Mammary epithelial cell (primary cell): ENCODE measurements at regions of chr2 and their contacts with region 1.

Region 1: GRCh38 chr2:218870984-218871344 is 9.7 kb upstream of the WNT10A start:
- DNase-seq: no peak
- H3K4me3 ChIP-seq: no peak overlapping the region
- H3K27ac ChIP-seq: no peak overlapping the region
- H3K4me1 ChIP-seq: no peaks in the 10 kb centered on the region
- H3K27me3 ChIP-seq: no peaks in the 10 kb centered on the region
- CTCF ChIP-seq: no peak

Region 2: DNA sequence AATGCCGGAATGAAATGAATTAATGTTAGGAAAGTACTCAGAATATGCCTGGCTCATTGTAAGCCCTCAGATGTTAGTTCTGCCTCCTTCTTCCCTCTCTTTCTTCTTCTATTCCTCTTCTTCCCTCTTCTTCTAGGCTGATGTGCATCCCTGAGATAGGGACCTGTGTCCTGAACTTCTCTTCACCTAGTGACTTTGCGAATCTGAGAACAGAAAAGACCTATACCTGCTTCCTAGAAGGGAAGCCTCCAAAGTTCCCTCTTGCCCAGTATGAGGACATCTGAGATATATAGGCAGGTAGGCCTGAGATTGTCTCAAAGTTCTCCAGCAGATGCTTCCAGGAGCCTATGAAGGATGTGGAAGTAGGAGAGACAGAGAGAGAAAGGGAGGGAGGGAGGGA is 97.1 kb before region 1 on chr2:
- CTCF ChIA-PET with region 1: no interaction called
- dilution Hi-C with region 1: loop called (anchors 5 kb)
- in situ Hi-C with region 1: no loop called
- intact Hi-C with region 1: no loop called
- DNase-seq: no peak
- H3K4me3 ChIP-seq: no peak overlapping the region
- H3K27ac ChIP-seq: no peak overlapping the region
- H3K4me1 ChIP-seq: no peaks in the 10 kb centered on the region
- H3K27me3 ChIP-seq: no peaks in the 10 kb centered on the region
- CTCF ChIP-seq: no peak

Region 3: DNA sequence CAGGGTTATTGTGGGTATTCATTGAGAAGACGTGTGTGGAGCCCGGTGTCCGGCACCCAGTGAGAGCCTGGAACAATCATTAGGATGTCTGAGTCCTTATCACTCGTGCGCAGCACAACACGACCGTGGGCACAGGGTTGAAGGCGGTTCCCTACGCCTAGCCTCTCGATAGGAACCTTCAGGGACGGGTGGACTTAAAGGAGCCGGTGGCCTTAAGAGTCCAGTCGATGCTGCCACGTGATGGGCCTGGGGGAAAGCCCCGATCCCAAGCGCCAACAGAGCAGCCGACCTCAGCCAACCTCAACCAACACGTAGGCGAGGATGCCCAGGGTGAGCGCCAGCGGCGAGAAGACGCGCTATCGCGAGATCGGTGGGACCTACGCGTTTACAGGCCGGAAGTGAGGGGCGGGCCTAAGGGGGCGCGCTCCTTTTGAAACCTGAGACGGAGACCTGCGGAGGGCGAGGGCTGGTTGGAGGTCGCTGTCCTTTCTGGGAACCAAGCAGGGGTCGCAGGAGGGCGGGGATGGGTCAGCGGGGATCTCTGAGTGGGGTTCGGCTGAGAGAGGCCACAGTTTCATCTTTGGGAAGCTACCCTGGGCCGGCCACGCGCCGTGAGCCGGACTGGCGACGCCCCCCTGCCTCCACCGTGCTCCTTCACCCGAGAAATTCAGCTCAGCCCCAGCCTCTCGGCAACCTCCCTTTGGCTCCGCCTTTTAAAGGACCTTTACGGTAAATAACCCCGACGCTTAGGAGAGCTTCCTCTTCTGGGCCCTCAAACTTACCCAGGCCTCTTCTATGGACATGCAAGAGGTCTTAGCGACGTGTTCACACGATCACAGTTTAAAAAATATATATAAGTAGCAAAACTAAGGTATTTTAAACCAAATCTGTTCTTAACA is 38.0 kb after region 1 on chr2:
- CTCF ChIA-PET with region 1: no interaction called
- dilution Hi-C with region 1: loop called (anchors 5 kb)
- in situ Hi-C with region 1: no loop called
- intact Hi-C with region 1: no loop called
- DNase-seq: peak; percentile 78
- H3K4me3 ChIP-seq: peak overlapping the region; percentile 58 to 74 (median 67)
- H3K27ac ChIP-seq: peak overlapping the region; percentile 52
- H3K4me1 ChIP-seq: peaks cover 8% of the 10 kb centered on the region
- H3K27me3 ChIP-seq: no peaks in the 10 kb centered on the region
- CTCF ChIP-seq: no peak

Region 4: GRCh38 chr2:218959141-218959731 is 88.3 kb after region 1 on chr2 and contains the start of gene CDK5R2:
- CTCF ChIA-PET with region 1: no interaction called
- dilution Hi-C with region 1: loop called (anchors 5 kb)
- in situ Hi-C with region 1: no loop called
- intact Hi-C with region 1: no loop called
- DNase-seq: peak; percentile 74
- H3K4me3 ChIP-seq: peak within 1 kb of the TSS; percentile 30 to 55 (median 51)
- H3K27ac ChIP-seq: no peak within 1 kb of the TSS
- H3K4me1 ChIP-seq: peaks cover 26% of the 10 kb centered on the region
- H3K27me3 ChIP-seq: peaks cover 28% of the 10 kb centered on the region
- CTCF ChIP-seq: no peak
- total RNA-seq, gene CDK5R2: 0.49 TPM in 1 of 2 donors, not detected in the other